ENCODE measurements at regions of chr7 and their contacts with region 1.

Region 1: GRCh38 chr7:99312316-99313203 is 13.1 kb upstream of the ARPC1A start:
- DNase-seq: peak; percentile 53 to 85 (median 79)
- ATAC-seq: peak; percentile 65 to 74
- H3K4me3 ChIP-seq: no peak overlapping the region
- H3K27ac ChIP-seq: no peak overlapping the region
- H3K4me1 ChIP-seq: peaks cover 5% of the 10 kb centered on the region
- H3K27me3 ChIP-seq: no peaks in the 10 kb centered on the region

Region 2: DNA sequence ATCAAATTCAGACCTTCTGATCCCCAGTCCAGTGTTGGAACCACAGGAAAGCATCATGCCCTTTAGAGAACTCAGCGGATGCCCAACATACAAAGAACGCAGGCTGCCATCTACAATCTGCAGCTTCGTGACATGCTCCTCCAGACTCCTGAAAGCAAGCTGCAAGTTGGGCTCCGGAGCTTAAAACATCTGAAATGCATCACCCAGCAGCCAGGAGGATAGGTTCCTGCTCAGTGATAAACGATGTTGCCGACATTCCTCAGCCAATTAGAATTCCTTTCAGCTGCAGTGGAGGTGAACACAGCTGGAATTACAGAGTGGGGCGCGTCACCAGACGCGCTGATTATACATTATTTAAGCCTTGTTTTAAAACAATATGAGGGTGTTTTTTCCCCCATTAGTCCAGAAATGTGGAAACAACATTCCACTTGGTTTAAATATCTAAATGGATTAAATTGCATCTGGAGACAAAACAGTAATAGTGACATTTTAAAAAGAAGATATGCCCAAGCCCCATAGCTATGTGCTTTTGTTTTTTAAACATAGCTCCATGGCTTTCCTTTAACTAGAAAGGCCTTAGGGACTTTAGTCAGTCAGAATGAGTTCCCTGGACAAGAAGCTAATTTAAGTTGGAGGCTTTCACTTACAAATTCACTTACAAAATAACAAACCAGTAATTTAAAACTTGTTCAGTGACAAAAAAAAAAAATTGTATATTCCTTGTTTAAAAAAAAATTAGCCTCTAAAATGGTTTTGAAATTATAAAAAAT is 175.0 kb before region 1 on chr7:
- intact Hi-C with region 1: loop called in 1 of 4 experiments (anchors 10 kb)
- DNase-seq: no peak
- ATAC-seq: no peak
- H3K4me3 ChIP-seq: no peak overlapping the region
- H3K27ac ChIP-seq: peak overlapping the region; percentile 56
- H3K4me1 ChIP-seq: peaks cover 7% of the 10 kb centered on the region
- H3K27me3 ChIP-seq: no peaks in the 10 kb centered on the region